ENCODE measurements at regions of chr17 and their contacts with region 1.

Region 1: GRCh38 chr17:62617125-62617893 is 10.2 kb upstream of the MRC2 start:
- DNase-seq: no peak
- H3K4me3 ChIP-seq: no peak overlapping the region
- H3K27ac ChIP-seq: no peak overlapping the region
- H3K4me1 ChIP-seq: no peaks in the 10 kb centered on the region
- H3K27me3 ChIP-seq: no peaks in the 10 kb centered on the region
- CTCF ChIP-seq: no peak

Region 2: GRCh38 chr17:62052757-62053338 is 564.5 kb before region 1 on chr17:
- CTCF ChIA-PET with region 1: no interaction called
- dilution Hi-C with region 1: no loop called
- in situ Hi-C with region 1: no loop called
- intact Hi-C with region 1: no loop called
- DNase-seq: no peak
- H3K4me3 ChIP-seq: no peak overlapping the region
- H3K27ac ChIP-seq: no peak overlapping the region
- H3K4me1 ChIP-seq: peaks cover 4% of the 10 kb centered on the region
- H3K27me3 ChIP-seq: no peaks in the 10 kb centered on the region
- CTCF ChIP-seq: no peak

Region 3: GRCh38 chr17:62656446-62656845 is 39.1 kb after region 1 on chr17:
- CTCF ChIA-PET with region 1: no interaction called
- dilution Hi-C with region 1: loop called (anchors 5 kb)
- in situ Hi-C with region 1: no loop called
- intact Hi-C with region 1: no loop called
- DNase-seq: no peak
- H3K4me3 ChIP-seq: no peak overlapping the region
- H3K27ac ChIP-seq: no peak overlapping the region
- H3K4me1 ChIP-seq: peaks cover 21% of the 10 kb centered on the region
- H3K27me3 ChIP-seq: no peaks in the 10 kb centered on the region
- CTCF ChIP-seq: no peak